Activated CD8-positive, alpha-beta T cell treated with anti-CD3 and anti-CD28 coated beads, Interleukin-2, amount 10 ng/mL, durations not matched to agents 7 days and 5 days (primary cell): ENCODE measurements at regions of chr2 and their contacts with region 1.

Region 1: GRCh38 chr2:162221064-162221463 is 22.2 kb downstream of the FAP start:
- DNase-seq: peak; percentile 72
- ATAC-seq: peak; percentile 60
- H3K4me3 Mint-ChIP-seq: no peak overlapping the region
- H3K27ac Mint-ChIP-seq: no peak overlapping the region
- H3K4me1 Mint-ChIP-seq: peaks cover 4% of the 10 kb centered on the region
- H3K27me3 Mint-ChIP-seq: peaks cover 34% of the 10 kb centered on the region

Region 2: DNA sequence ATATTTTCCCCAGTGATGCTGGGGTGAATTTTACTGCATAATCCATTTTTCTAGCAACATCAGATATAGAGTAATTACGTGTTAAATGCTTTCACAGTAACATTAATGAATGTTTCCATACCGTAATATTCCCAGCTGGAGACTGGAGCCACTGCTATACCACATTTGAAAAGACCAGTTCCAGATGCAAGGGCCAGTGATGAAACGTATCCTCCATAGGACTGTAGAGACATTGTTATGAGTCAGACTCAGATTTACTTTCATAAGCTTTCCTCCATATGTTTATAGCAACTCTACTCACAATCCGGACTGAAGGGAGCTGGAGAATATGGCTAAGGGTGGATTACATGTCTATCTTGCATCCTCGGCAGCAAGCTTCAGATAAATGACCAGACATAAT is 46.3 kb before region 1 on chr2:
- CTCF ChIA-PET with region 1: interaction called, 10 read pairs
- POLR2A ChIA-PET with region 1: no interaction called
- DNase-seq: no peak
- ATAC-seq: no peak
- H3K4me3 Mint-ChIP-seq: no peak overlapping the region
- H3K27ac Mint-ChIP-seq: no peak overlapping the region
- H3K4me1 Mint-ChIP-seq: peaks cover 7% of the 10 kb centered on the region
- H3K27me3 Mint-ChIP-seq: peaks cover 33% of the 10 kb centered on the region

Region 3: GRCh38 chr2:162233197-162233596 is 12.1 kb after region 1 on chr2:
- CTCF ChIA-PET with region 1: interaction called, 54 read pairs
- POLR2A ChIA-PET with region 1: no interaction called
- DNase-seq: no peak
- ATAC-seq: no peak
- H3K4me3 Mint-ChIP-seq: no peak overlapping the region
- H3K27ac Mint-ChIP-seq: no peak overlapping the region
- H3K4me1 Mint-ChIP-seq: no peaks in the 10 kb centered on the region
- H3K27me3 Mint-ChIP-seq: peaks cover 30% of the 10 kb centered on the region

Region 4: DNA sequence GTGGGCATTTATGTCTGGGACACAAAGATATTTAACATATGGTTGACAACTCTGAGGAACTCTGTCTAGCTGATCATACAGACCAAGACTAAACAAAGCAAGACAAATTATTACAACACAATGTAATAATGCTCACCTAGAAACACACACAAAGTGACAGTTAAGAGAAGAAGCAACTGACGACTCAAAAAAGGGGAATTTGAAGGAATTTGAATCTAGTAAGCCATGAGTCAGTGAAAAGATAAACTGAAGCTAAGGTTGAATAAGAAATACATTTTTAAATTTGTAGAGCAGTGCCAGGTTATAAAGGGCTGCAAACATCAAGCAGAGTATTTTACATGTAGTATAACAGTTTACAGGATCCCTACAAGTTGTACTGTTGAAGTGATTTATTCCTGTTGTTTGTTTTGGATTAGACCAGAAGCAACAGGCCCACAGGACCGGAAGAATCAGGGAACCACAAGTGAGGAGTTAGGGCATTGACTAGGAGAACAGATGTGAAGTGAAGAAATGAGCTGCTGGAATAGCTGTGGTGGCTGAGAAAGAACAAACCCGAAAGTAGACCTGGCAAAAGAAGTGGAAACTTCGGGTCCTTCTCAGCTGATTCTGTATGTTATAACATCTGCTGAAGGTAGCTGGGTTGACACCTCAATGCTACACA is 61.8 kb after region 1 on chr2:
- CTCF ChIA-PET with region 1: interaction called, 24 read pairs
- POLR2A ChIA-PET with region 1: no interaction called
- DNase-seq: no peak
- ATAC-seq: no peak
- H3K4me3 Mint-ChIP-seq: no peak overlapping the region
- H3K27ac Mint-ChIP-seq: no peak overlapping the region
- H3K4me1 Mint-ChIP-seq: no peaks in the 10 kb centered on the region
- H3K27me3 Mint-ChIP-seq: no peaks in the 10 kb centered on the region

Region 5: GRCh38 chr2:162308752-162309503 is 87.9 kb after region 1 on chr2:
- CTCF ChIA-PET with region 1: interaction called, 253 read pairs
- POLR2A ChIA-PET with region 1: no interaction called
- DNase-seq: no peak
- ATAC-seq: peak; percentile 63
- H3K4me3 Mint-ChIP-seq: no peak overlapping the region
- H3K27ac Mint-ChIP-seq: peak overlapping the region; percentile 33
- H3K4me1 Mint-ChIP-seq: peaks cover 42% of the 10 kb centered on the region
- H3K27me3 Mint-ChIP-seq: no peaks in the 10 kb centered on the region